Prostate gland (tissue), 2 donors: ENCODE measurements at regions of chr3 and their contacts with region 1.

Region 1: DNA sequence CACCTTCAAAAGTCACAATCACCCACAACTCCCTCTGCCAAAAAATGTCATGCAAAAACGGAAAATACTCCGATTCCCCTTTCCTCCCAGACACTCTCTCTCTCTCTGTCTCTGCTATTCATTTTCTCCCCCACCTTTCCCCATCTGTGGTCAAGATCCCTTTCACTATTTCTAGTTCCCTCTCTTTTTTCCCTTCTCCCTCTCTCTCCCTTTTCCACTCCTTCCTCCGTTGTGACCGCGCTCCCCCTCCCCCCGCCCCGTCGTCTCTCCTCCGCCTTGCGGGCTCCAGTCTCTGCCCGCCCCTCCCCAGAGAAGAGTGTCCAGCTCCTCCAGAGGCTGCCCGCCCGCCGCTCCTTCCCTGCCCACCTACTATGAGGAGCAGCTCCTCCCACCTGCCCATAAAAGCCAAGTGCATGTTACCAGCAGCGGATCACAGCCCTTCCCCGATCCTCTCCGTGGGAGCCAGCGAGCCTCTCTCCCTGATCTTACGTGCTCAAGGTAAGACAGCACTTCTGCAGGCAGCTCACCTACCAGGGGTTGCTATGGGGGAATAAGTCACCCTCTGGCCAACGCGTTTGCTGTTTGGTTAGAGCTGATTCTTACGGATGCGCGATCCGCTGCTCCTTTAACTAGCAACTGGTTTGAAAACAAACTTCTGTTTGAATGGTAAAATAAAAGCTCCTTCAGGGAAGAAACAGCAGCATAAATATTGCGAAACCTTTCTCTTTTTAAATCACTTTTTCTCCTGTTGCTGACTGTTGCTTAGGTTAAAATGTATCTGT is at the start of gene COL8A1:
- DNase-seq: peak; percentile 8
- H3K4me3 ChIP-seq: peak within 1 kb of the TSS; percentile 27 to 36
- H3K27ac ChIP-seq: peak within 1 kb of the TSS; percentile 49 to 69
- H3K4me1 ChIP-seq: no peaks in the 10 kb centered on the region
- H3K27me3 ChIP-seq: no peaks in the 10 kb centered on the region
- CTCF ChIP-seq: no peak
- POLR2A ChIP-seq: no peak
- total RNA-seq, gene COL8A1: 8.0 to 8.1 TPM

Region 2: DNA sequence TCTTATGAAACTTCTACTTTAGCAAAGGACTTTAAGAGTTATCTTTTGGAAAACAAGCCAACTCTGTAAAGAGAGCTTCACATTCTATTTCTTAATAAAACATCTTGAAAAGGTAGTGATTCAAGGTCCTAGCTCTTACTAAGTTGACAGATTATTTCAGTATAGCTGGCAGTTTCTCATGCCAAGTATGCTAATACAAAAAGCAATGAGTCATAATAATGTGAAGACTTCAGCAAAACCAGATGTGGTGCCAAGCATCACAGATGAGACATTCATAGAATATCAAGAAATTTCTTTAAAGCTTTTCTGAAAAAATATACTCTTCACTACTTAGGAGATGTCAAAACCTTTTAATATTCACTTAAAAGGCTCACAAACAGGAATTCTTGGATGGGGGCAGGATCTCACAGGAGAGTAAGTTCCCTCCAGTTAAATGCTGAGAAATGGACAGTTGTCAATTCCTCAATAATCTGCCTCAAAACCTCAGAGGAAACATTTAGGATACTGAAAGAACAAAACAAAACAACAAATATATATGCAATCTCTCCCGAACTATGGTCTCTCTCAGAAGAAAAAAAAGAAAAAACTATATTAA is 782.5 kb before region 1 on chr3:
- intact Hi-C with region 1: no loop called
- DNase-seq: no peak
- H3K4me3 ChIP-seq: no peak overlapping the region
- H3K27ac ChIP-seq: no peak overlapping the region
- H3K4me1 ChIP-seq: no peaks in the 10 kb centered on the region
- H3K27me3 ChIP-seq: no peaks in the 10 kb centered on the region
- CTCF ChIP-seq: no peak
- POLR2A ChIP-seq: no peak

Region 3: DNA sequence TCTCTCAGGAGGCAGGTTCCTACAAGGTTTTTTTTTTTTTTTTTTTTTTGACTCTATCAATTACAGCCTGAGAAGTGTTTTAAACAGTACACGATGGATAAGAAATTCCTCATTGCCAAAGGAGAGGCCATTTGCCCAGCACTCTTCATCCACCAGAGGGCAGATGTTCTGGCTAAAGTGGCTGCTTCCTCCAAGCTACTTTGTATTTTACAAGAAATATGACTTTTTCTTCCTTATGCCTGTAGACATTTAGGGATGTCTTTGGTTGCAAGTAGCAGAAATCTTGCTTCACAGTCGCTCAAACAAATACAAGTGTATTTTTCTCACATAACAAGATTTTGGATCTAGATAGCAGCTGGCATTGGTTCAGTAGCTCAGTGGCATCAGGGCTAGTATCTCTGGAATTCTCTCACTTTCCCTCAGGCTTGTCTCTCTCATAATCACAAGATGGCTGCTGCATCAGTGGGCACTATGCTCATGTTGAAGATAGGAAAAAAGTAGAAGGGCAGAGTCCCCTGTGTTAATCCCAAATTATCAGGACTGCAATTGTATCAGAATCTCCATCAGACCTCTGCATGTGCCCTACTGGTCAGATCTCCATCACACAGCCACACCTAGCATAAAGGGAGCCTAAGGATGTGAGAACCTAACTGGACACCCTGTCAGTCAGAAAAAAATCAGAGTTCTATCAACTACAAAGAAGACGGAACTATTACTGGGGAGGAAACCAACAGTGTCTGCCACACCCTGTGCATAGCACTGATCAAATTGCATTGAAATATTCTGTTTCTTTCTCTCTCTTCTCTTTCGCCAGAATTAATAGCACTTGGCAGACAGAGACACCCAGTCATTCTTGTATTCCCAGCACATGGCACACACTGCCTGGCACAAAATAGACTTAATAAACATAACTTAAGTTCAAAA is 138.9 kb before region 1 on chr3:
- intact Hi-C with region 1: loop called (anchors 10 kb)
- DNase-seq: no peak
- H3K4me3 ChIP-seq: no peak overlapping the region
- H3K27ac ChIP-seq: no peak overlapping the region
- H3K4me1 ChIP-seq: no peaks in the 10 kb centered on the region
- H3K27me3 ChIP-seq: no peaks in the 10 kb centered on the region
- CTCF ChIP-seq: peak; percentile 11 to 62 (median 49)
- POLR2A ChIP-seq: no peak

Region 4: GRCh38 chr3:99686955-99687612 is 48.7 kb after region 1 on chr3:
- intact Hi-C with region 1: loop called (anchors 5 kb)
- DNase-seq: peak; percentile 19
- H3K4me3 ChIP-seq: no peak overlapping the region
- H3K27ac ChIP-seq: no peak overlapping the region
- H3K4me1 ChIP-seq: no peaks in the 10 kb centered on the region
- H3K27me3 ChIP-seq: no peaks in the 10 kb centered on the region
- CTCF ChIP-seq: peak; percentile 50 to 70 (median 68)
- POLR2A ChIP-seq: no peak

Region 5: GRCh38 chr3:99765042-99765942 is 126.9 kb after region 1 on chr3:
- intact Hi-C with region 1: loop called (anchors 5 kb)
- DNase-seq: no peak
- H3K4me3 ChIP-seq: no peak overlapping the region
- H3K27ac ChIP-seq: no peak overlapping the region
- H3K4me1 ChIP-seq: no peaks in the 10 kb centered on the region
- H3K27me3 ChIP-seq: no peaks in the 10 kb centered on the region
- CTCF ChIP-seq: no peak
- POLR2A ChIP-seq: no peak